Sciatic nerve (tissue), 2 donors: ENCODE measurements at regions of chr11 and their contacts with region 1.

Region 1: DNA sequence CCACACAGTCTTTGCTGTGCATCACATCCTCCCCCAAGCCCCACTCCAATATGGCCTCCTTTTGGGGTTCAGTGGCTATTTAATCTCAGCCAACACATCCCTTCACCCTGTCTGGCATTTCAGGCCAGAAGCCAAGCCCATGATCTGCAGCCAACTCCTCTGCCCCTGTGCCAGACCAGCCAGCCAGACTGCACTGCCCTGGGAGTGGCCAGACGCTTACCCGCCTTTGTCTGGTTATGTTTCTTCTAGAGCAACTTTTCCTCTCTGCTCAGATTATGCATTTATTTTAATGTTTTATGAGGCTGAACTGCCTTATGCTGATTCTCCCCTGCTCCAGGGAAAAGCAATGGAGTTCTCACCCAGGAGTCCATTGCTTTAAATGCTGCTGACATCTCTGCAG is 206.7 kb upstream of the TBCEL start:
- DNase-seq: no peak
- ATAC-seq: no peak

Region 2: DNA sequence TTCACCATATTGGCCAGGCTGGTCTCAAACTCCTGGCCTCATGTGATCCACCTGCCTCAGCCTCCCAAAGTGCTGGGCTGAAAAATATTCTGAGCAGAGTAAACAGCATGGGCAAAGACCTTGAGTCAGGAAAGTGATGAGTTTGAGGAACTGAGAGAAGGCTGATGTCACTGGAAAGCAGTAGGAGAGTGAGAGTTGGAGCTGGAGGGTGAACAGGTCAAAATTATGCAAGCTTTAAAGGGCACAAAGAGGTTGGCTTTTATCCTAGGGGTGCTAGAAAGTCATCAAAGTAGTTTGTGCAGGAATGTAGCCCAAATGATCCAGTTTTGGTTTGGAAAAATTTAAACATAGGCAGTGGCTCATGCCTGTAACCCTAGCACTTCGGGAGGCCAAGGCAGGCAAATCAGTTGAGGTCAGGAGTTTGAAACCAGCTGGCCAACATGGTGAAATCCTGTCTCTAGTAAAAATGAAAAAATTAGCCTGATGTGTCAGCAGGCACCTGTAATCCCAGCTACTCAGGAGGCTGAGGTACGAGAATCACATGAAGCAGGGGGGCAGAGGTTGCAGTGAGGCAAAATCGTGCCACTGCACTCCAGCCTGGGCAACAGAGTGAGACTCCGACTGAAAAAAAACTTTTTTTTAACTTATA is 1978.1 kb before region 1 on chr11:
- intact Hi-C with region 1: loop called (anchors 10 kb)
- DNase-seq: no peak
- ATAC-seq: peak; percentile 79

Region 3: GRCh38 chr11:120579611-120580031 is 237.5 kb before region 1 on chr11:
- intact Hi-C with region 1: no loop called
- DNase-seq: no peak
- ATAC-seq: no peak